ENCODE measurements at regions of chr3 and their contacts with region 1.

Region 1: DNA sequence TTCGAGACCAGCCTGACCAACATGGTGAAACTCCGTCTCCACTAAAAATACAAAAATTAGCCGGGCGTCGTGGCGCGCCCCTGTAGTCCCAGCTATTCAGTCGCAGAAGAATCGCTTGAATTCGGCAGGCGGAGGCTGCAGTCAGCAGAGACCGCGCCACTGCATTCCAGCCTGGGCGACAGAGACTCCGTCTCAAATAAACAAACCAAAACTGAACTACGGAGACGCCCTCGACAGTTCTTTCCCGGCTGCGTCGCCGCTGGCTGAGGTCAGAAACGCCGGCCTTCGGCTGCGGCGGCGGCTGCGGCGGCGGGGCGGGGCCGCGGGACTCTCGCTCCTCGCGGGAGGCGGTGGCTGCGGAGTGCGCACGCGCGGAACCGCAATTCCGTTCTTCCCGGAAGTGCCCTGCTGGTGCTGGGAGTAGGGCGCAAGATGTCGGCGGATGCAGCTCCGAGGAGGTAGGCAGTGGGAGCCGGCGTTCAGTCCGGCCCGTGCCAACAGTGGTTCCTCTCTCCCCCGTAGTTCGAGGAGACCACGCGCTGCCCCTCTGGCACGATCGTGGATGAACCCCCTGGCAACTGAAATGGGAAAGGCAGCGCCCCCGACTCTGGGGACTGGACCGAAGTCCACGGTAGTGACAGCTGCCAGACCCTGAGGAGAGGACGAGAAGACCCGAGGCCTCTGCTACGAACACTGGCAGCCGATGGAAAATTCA is 49.5 kb downstream of the TMEM44 start:
- DNase-seq: peak; percentile 98

Region 2: GRCh38 chr3:194472290-194472920 is 111.4 kb before region 1 on chr3:
- intact Hi-C with region 1: loop called (anchors 1 kb)
- DNase-seq: no peak

Region 3: GRCh38 chr3:194671900-194672808 is 88.4 kb after region 1 on chr3 and contains the start of gene LSG1:
- intact Hi-C with region 1: loop called (anchors 5 kb)
- DNase-seq: peak; percentile 95
- total RNA-seq, gene LSG1: 21.3 TPM

Measured in cardiac septum (tissue), 1 donor.